ENCODE measurements at regions of chr1 and their contacts with region 1.

Region 1: DNA sequence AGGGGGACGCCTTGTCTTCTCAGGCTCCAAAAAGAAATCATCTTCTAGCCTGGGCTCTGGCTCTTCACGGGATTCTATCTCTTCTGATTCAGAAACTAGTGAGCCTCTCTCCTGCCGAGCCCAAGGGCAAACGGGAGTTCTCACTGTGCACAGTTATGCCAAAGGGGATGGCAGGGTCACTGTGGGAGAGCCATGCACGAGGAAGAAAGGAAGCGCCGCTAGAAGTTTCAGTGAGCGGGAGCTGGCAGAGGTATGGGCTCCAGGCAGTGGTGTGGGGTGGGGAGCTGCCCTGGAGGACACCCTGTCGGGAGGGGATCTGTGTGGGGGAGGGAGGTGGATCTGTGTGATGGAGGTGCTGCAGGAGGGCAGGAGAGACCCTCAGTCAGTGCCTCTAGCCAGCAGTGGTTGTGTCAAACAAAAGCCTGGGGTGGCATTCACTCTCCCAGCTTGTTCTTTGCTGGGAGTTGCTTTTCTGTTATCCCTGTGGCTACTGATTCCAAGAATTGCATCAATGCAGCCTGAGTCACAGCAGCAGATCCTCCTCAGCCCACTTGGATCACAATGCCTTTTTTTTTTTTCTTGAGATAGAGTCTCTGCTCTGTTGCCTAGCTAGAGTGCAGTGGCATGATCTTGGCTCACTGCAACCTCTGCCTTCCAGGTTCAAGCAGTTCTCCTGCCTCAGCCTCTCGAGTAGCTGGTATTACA is 21.8 kb downstream of the KDM4A start:
- DNase-seq: no peak
- H3K4me3 ChIP-seq: no peak overlapping the region
- H3K27ac ChIP-seq: no peak overlapping the region
- H3K4me1 ChIP-seq: no peaks in the 10 kb centered on the region
- H3K27me3 ChIP-seq: no peaks in the 10 kb centered on the region
- CTCF ChIP-seq: no peak
- EP300 ChIP-seq: no peak
- POLR2A ChIP-seq: no peak
- RAD21 ChIP-seq: no peak

Region 2: GRCh38 chr1:43688594-43689000 is 16.8 kb after region 1 on chr1:
- CTCF ChIA-PET with region 1: interaction called, 5 read pairs
- POLR2A ChIA-PET with region 1: interaction called, 651 read pairs
- DNase-seq: no peak
- H3K4me3 ChIP-seq: no peak overlapping the region
- H3K27ac ChIP-seq: no peak overlapping the region
- H3K4me1 ChIP-seq: no peaks in the 10 kb centered on the region
- H3K27me3 ChIP-seq: no peaks in the 10 kb centered on the region
- CTCF ChIP-seq: no peak
- EP300 ChIP-seq: no peak
- POLR2A ChIP-seq: no peak
- RAD21 ChIP-seq: no peak

Measured in H1 (cell line).